ENCODE measurements at regions of chr12 and their contacts with region 1.

Region 1: DNA sequence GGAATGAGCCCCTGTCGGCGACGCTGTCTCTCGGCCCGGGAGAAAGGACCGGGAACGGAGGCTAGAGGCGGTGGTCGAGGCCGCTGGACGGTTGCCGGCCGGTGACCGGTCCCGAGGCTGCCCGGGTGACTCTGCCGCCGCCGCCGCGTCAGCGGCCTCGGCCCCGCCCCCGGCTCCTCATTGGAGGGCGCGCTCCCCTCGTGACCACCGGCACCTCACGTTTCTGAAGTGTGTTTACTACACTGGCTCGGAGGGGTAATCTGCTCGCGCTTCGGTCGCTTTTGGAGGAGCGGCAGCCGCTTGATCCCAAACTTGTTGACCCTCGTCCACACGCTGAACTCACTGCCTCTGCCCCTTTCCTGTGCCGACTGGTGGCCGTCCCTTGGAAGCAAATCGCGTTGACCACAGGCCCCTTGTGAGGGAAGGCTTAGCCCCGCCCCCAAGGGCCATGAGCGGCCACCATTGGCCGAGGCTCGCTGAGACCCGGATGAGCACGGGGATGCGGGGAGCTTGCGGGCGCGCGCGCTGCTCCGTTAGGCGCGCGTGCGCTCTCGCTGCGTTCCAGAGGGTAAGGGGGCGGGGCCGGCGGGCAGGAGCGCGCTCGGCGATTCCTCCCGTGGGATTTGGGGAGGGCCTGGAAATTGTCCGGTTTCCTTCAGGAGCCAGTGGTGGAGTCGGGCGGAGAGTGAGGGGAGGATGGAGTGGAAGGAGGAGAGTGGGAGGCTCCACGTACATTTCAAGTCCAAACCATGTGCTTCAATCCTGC is at the start of gene CRY1:
- DNase-seq: peak; percentile 92 to 98 (median 94)
- H3K4me3 ChIP-seq: peak within 1 kb of the TSS; percentile 70 to 100 (median 96)
- H3K27ac ChIP-seq: peak within 1 kb of the TSS; percentile 76 to 99 (median 96)
- H3K27me3 ChIP-seq: no peaks in the 10 kb centered on the region
- CTCF ChIP-seq: peak in 19 of 56 donors; percentile 7 to 43 (median 22)
- total RNA-seq, gene CRY1: 11.9 to 34.9 (median 18.1) TPM

Region 2: DNA sequence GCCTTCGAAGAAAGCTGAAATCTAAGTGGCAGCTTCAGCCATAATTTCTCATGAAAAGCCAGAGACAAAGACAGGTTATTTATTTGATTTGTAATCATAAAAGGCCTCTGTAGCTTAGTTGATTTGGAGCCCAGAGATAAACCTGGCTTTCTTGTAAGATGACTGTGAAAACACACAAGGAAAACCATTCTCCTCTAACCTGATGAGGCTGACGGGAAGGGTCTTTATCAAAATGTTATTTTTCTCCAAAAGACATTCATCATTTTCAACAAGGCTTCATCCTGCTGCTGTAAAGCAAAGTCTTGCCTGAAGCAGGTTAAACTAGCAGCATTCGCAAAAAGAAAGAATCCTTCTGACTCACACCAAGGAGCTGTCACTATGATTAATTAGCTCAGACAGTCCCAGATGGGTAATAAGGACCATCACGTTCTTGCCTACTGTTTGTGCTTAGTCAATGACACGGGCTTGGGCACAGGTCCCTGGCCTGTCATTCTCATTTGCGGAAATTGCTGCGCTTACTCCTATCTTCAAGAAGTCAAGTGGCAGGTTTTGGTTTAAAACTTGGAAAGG is 1476.5 kb before region 1 on chr12:
- intact Hi-C with region 1: no loop called
- DNase-seq: no peak
- H3K4me3 ChIP-seq: no peak overlapping the region
- H3K27ac ChIP-seq: no peak overlapping the region
- H3K27me3 ChIP-seq: no peaks in the 10 kb centered on the region
- CTCF ChIP-seq: no peak

Region 3: GRCh38 chr12:106986625-106987430 is 106.8 kb before region 1 on chr12 and contains the start of gene MTERF2:
- intact Hi-C with region 1: loop called (anchors 2 to 10 kb)
- DNase-seq: peak; percentile 86 to 97 (median 94)
- H3K4me3 ChIP-seq: peak within 1 kb of the TSS; percentile 60 to 99 (median 83)
- H3K27ac ChIP-seq: peak within 1 kb of the TSS in 57 of 59 donors; percentile 58 to 97 (median 85)
- H3K27me3 ChIP-seq: no peaks in the 10 kb centered on the region
- CTCF ChIP-seq: peak in 31 of 56 donors; percentile 6 to 57 (median 30)
- total RNA-seq, gene MTERF2: 17.1 to 39.1 (median 25.8) TPM

Region 4: GRCh38 chr12:107169200-107169599 is 75.6 kb after region 1 on chr12:
- intact Hi-C with region 1: no loop called
- DNase-seq: no peak
- H3K4me3 ChIP-seq: no peak overlapping the region
- H3K27ac ChIP-seq: no peak overlapping the region
- H3K27me3 ChIP-seq: peaks cover 0 to 45% (median 8%) of the 10 kb centered on the region in 45 donors
- CTCF ChIP-seq: no peak

Region 5: DNA sequence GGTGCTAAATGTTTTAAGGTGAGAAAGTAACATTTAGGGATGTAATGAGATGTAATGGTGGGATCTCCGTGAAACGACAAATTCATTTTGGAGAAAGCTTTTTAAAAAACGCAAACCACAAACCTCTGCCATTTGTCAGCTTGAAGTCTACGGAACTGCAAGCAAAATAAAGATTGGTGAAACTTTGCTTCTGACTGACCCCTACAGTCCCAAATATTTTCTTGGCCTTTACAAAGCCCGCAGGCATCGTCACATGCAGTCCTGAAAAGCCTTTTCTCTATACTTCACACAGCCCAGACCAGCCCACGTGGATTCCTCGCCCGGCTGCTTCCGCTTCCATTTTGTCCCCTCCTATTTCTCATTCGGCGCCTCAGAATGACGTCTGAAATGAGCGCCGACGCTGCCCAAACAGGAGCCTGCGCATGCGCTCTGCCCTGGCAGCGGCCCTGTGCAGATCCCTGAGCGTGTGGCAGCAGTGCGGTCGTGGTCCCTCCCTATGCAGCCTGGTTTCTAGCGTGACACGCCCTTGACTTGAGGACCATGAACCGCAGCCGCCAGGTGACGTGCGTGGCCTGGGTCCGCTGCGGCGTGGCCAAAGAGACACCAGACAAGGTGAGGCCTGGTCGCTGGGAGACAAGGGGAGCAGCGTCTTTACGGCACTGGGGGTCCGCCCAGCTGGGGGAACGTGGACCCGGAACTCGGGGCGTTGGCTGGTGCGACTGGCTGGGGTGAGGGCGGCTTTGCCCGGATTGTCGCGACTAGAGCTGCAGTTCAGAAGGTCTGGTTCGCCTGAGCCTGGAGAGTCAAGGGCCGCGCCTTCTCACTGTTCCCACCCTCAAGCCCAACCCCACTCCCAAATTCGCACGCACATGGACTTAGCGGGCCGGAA is 592.0 kb after region 1 on chr12 and contains the start of gene PWP1:
- intact Hi-C with region 1: loop called in 1 of 2 experiments (anchors 5 kb)
- DNase-seq: peak; percentile 85 to 93 (median 92)
- H3K4me3 ChIP-seq: peak within 1 kb of the TSS; percentile 60 to 100 (median 93)
- H3K27ac ChIP-seq: peak within 1 kb of the TSS in 44 of 59 donors; percentile 7 to 92 (median 68)
- H3K27me3 ChIP-seq: peaks cover 0 to 7% (median 0%) of the 10 kb centered on the region in 45 donors
- CTCF ChIP-seq: peak in 38 of 56 donors; percentile 9 to 69 (median 36)
- total RNA-seq, gene PWP1: 14.2 to 42.9 (median 30.0) TPM